B cell (primary cell): ENCODE measurements at regions of chr3 and their contacts with region 1.

Region 1: DNA sequence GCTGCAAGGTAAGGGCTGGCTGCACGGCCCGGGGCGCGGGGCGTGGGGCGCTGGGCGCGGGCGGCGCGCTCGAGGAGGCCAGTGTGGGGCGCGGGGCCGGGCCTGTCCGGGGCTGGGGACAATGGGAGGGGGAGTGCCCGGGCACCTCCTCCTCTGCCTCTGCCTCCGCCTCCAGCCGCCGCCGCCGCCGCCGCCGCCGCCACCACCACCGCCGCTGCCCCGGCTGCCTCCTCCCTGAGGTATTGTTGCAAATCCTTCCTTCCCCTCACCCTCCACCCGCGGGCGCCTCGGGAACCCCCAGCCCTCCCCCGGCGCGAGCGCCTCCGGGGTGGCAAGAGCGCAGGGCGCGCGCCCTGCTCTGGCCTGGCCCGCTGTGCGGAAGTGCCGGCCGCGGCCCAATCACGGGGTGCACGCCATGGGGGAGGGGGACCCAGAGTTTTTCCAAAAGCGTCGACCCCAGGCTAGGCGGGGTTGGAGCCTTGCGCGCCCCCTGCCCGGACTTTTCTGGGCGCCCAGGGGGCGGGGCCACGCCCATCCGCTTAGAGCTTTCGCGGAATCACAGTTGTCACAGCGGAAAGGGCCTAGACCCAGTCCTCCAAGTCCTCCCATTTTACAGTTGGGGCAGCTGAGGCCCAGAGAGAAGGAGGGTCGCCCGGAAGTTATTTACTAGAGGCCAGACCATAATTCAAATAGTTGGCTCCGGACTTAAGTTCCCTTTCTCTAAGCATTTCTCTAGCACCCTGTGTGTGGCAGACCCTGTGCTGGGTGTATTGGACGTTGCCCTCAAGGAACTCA is at the start of gene LPP:
- DNase-seq: peak; percentile 94
- ATAC-seq: peak; percentile 87
- H3K4me3 ChIP-seq: peak within 1 kb of the TSS; percentile 80 to 97 (median 93)
- H3K4me3 Mint-ChIP-seq: peak within 1 kb of the TSS; percentile 95
- H3K27ac ChIP-seq: peak within 1 kb of the TSS; percentile 88 to 91
- H3K27ac Mint-ChIP-seq: peak within 1 kb of the TSS; percentile 95
- H3K4me1 ChIP-seq: peaks cover 18 to 27% of the 10 kb centered on the region in 2 donors
- H3K4me1 Mint-ChIP-seq: peaks cover 51% of the 10 kb centered on the region
- H3K27me3 ChIP-seq: no peaks in the 10 kb centered on the region
- H3K27me3 Mint-ChIP-seq: no peaks in the 10 kb centered on the region
- CTCF ChIP-seq: peak; percentile 19
- total RNA-seq, gene LPP: 81.7 and 94.5 TPM in 2 replicates

Region 2: DNA sequence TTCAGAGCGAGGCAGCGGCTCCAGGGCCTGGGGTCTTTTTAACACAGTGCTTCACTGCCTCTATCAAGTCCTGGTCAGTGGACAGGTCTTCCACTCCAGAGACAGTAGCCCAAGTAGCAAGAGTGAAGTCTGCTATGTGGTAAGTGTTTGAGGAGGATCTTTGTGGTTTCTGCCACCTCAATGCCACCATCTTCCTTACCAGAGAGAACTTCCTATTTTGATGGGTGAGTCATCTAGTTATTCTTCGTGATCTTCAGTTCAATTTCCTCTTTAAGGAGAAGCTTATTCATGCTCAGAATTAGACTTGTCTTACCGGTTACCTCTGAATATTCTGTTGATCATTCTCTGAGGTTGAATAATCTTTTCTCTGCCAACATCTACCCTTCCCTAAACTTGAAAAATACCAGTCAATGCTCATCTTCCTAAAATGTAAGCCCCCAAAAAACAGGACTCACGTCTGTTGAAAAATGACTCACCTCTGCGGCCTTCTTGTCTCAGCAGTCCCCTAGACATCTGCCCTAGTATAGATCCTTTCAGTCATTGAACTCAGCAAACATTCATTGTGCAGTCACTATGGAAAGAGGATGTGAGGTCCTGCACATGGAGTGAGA is 376.8 kb before region 1 on chr3:
- CTCF ChIA-PET with region 1: no interaction called
- POLR2A ChIA-PET with region 1: no interaction called
- intact Hi-C with region 1: loop called (anchors 10 kb)
- DNase-seq: peak; percentile 78
- ATAC-seq: peak; percentile 80
- H3K4me3 ChIP-seq: no peak overlapping the region
- H3K4me3 Mint-ChIP-seq: peak overlapping the region; percentile 62
- H3K27ac ChIP-seq: peak overlapping the region in 1 of 2 donors; percentile 6
- H3K27ac Mint-ChIP-seq: peak overlapping the region; percentile 89
- H3K4me1 ChIP-seq: peaks cover 29 to 35% of the 10 kb centered on the region in 2 donors
- H3K4me1 Mint-ChIP-seq: peaks cover 33% of the 10 kb centered on the region
- H3K27me3 ChIP-seq: no peaks in the 10 kb centered on the region
- H3K27me3 Mint-ChIP-seq: no peaks in the 10 kb centered on the region
- CTCF ChIP-seq: no peak

Region 3: DNA sequence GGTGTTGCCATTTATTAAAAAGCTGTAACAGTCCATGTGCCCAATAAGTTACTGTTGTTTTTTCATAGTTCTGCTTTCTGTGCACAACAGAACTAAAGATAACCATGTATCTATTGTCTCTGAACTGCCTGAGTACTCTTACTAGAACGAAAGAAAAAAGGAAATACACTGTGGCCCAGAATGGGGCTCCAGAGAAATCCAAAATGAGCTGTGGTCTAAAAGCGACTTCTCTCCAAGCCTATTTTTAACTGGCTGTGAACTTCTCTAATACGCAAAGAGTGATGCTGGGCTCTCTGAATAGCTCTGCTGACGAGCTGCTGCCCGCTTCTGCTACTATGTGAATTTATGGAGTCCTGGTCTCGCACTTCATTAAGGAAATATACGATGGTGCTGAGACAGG is 56.4 kb before region 1 on chr3:
- CTCF ChIA-PET with region 1: no interaction called
- POLR2A ChIA-PET with region 1: no interaction called
- intact Hi-C with region 1: loop called (anchors 5 kb)
- DNase-seq: peak; percentile 71
- ATAC-seq: peak; percentile 79
- H3K4me3 ChIP-seq: peak overlapping the region in 2 of 5 experiments; percentile 9 to 16
- H3K4me3 Mint-ChIP-seq: peak overlapping the region; percentile 59
- H3K27ac ChIP-seq: peak overlapping the region; percentile 1 to 27
- H3K27ac Mint-ChIP-seq: peak overlapping the region; percentile 65
- H3K4me1 ChIP-seq: peaks cover 15 to 17% of the 10 kb centered on the region in 2 donors
- H3K4me1 Mint-ChIP-seq: peaks cover 20% of the 10 kb centered on the region
- H3K27me3 ChIP-seq: no peaks in the 10 kb centered on the region
- H3K27me3 Mint-ChIP-seq: no peaks in the 10 kb centered on the region
- CTCF ChIP-seq: no peak

Region 4: GRCh38 chr3:188185717-188186251 is 31.6 kb after region 1 on chr3:
- CTCF ChIA-PET with region 1: no interaction called
- POLR2A ChIA-PET with region 1: interaction called, 7 read pairs
- intact Hi-C with region 1: loop called (anchors 2 kb)
- DNase-seq: peak; percentile 45
- ATAC-seq: peak; percentile 34
- H3K4me3 ChIP-seq: no peak overlapping the region
- H3K4me3 Mint-ChIP-seq: peak overlapping the region; percentile 8
- H3K27ac ChIP-seq: peak overlapping the region in 1 of 2 donors; percentile 72
- H3K27ac Mint-ChIP-seq: peak overlapping the region; percentile 74
- H3K4me1 ChIP-seq: peaks cover 23% of the 10 kb centered on the region in 2 donors
- H3K4me1 Mint-ChIP-seq: peaks cover 44% of the 10 kb centered on the region
- H3K27me3 ChIP-seq: no peaks in the 10 kb centered on the region
- H3K27me3 Mint-ChIP-seq: no peaks in the 10 kb centered on the region
- CTCF ChIP-seq: no peak

Region 5: GRCh38 chr3:188244395-188244861 is 90.2 kb after region 1 on chr3:
- CTCF ChIA-PET with region 1: no interaction called
- POLR2A ChIA-PET with region 1: no interaction called
- intact Hi-C with region 1: loop called (anchors 2 kb)
- DNase-seq: peak; percentile 56
- ATAC-seq: peak; percentile 64
- H3K4me3 ChIP-seq: no peak overlapping the region
- H3K4me3 Mint-ChIP-seq: peak overlapping the region; percentile 42
- H3K27ac ChIP-seq: peak overlapping the region; percentile 43 to 79
- H3K27ac Mint-ChIP-seq: peak overlapping the region; percentile 60
- H3K4me1 ChIP-seq: peaks cover 53 to 54% of the 10 kb centered on the region in 2 donors
- H3K4me1 Mint-ChIP-seq: peaks cover 70% of the 10 kb centered on the region
- H3K27me3 ChIP-seq: no peaks in the 10 kb centered on the region
- H3K27me3 Mint-ChIP-seq: no peaks in the 10 kb centered on the region
- CTCF ChIP-seq: no peak

Region 6: DNA sequence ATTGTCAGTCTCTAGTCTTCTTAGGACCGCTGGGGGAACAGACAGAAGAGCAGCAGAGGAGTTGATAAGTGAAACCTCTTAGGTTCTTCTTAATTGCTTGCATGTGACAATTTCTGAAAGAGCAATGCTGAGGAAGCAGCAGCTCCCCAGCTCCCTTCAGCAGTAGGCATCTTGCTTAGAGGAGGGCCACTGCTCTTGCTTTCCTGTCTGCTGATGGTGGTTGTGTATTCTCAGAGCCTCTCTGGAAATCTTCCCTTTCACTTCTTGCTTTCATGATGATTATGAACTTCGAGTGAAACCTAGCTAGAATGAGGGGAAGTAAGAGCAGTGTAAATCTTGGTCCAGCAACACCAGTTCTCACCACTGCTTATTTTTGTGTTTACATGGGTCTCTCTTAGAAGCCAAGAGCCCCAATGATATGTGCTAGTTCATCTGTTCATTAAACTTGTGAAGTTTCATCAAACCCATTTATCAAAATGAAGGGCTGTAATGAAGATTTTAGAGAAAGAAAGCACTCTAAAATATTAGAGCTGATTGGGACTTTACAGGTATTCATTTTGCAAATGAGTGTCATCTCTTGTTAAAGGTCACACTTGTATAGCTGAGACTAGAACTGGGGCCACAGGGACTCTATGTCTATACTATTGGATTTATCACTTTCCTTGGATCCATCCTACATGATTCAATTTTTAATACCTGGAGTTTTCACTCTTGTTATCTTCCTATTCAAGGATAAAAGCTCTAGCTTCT is 246.5 kb after region 1 on chr3:
- CTCF ChIA-PET with region 1: interaction called, 4 read pairs
- POLR2A ChIA-PET with region 1: no interaction called
- intact Hi-C with region 1: loop called (anchors 2 kb)
- DNase-seq: peak; percentile 82
- ATAC-seq: peak; percentile 87
- H3K4me3 ChIP-seq: no peak overlapping the region
- H3K4me3 Mint-ChIP-seq: peak overlapping the region; percentile 53
- H3K27ac ChIP-seq: peak overlapping the region; percentile 89 to 95
- H3K27ac Mint-ChIP-seq: peak overlapping the region; percentile 95
- H3K4me1 ChIP-seq: peaks cover 63 to 72% of the 10 kb centered on the region in 2 donors
- H3K4me1 Mint-ChIP-seq: peaks cover 87% of the 10 kb centered on the region
- H3K27me3 ChIP-seq: no peaks in the 10 kb centered on the region
- H3K27me3 Mint-ChIP-seq: no peaks in the 10 kb centered on the region
- CTCF ChIP-seq: no peak